ENCODE measurements at regions of chr19 and their contacts with region 1.

Region 1: DNA sequence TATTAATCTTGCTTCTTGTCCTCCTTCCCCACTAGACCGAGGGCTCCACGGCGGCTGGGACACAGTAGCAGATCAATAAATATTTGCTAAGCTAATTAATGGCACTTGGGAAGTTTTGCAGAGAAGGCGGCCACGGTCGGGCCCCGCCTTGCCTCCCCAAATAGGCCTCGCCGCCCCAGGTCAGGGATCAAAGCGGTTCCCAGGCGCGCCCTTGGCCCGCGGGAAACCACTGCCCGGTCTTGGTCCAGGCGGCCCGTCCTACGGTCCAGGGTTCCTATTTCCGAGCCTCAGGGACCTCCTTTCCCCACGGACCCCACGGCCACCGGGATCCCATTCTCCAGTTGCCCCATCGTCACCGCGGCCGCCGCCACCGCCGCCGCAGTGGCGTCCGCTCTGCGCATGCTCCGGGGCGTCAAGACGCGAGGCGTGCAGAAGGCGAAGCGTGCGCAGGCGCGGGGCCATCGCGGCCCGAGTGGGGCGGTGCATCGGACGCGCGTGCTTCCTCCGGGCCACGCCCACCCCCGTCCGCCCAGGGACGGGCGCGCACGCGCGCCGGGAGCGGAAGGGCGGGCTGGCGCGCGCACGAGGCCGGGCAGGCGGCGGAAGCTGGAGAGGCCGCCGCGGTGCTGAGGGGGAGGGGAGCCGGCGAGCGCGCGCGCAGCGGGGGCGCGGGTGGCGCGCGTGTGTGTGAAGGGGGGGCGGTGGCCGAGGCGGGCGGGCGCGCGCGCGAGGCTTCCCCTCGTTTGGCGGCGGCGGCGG is at the start of gene SMARCA4:
- DNase-seq: peak; percentile 96
- H3K4me3 Mint-ChIP-seq: peak within 1 kb of the TSS; percentile 91
- H3K27ac Mint-ChIP-seq: peak within 1 kb of the TSS; percentile 92
- H3K4me1 Mint-ChIP-seq: peaks cover 47% of the 10 kb centered on the region
- H3K27me3 Mint-ChIP-seq: no peaks in the 10 kb centered on the region
- total RNA-seq, gene SMARCA4: 111 to 115 TPM

Region 2: DNA sequence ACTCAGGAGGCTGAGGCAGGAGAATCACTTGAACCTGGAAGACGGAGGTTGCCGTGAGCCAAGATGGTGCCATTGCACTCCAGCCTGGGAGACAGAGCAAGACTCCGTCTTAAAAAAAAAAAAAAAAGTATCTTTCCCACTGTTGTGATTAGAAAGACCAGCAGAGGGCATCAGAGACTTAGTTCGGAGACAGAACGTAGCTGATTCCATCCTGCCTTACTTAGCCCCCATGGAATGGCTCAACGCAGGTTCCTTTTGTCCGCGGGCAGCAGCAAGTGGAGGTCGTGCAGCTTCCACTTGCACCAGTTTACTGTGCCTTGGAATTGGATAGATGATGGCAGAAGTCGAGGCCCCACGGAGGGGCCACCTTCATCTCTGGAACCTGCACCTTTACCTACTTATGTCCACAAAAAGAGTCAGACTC is 23.8 kb before region 1 on chr19:
- CTCF ChIA-PET with region 1: interaction called, 14 read pairs
- POLR2A ChIA-PET with region 1: no interaction called
- DNase-seq: peak; percentile 52
- H3K4me3 Mint-ChIP-seq: no peak overlapping the region
- H3K27ac Mint-ChIP-seq: no peak overlapping the region
- H3K4me1 Mint-ChIP-seq: peaks cover 14% of the 10 kb centered on the region
- H3K27me3 Mint-ChIP-seq: no peaks in the 10 kb centered on the region

Region 3: DNA sequence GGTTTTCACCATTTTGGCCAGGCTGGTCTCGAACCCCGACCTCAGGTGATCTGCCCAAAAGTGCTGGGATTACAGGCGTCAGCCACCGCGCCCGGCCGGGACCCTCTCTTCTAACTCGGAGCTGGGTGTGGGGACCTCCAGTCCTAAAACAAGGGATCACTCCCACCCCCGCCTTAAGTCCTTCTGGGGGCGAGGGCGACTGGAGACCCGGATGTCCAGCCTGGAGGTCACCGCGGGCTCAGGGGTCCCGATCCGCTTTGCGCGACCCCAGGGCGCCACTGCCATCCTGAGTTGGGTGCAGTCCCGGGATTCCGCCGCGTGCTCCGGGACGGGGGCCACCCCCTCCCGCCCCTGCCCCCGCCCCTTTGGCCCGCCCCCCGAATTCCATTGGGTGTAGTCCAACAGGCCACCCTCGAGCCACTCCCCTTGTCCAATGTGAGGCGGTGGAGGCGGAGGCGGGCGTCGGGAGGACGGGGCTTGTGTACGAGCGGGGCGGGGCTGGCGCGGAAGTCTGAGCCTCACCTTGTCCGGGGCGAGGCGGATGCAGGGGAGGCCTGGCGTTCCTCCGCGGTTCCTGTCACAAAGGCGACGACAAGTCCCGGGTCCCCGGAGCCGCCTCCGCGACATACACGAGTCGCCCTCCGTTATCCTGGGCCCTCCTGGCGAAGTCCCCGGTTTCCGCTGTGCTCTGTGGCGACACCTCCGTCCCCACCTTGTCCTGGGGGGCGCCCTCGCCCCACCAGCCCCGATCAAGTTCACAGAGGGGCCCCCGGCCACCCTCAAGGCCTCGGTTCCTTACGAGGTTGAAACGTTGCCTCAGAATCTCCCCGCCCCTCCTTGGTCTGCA is 129.8 kb after region 1 on chr19:
- CTCF ChIA-PET with region 1: no interaction called
- POLR2A ChIA-PET with region 1: no interaction called
- DNase-seq: peak; percentile 99
- H3K4me3 Mint-ChIP-seq: peak overlapping the region; percentile 97
- H3K27ac Mint-ChIP-seq: peak overlapping the region; percentile 99
- H3K4me1 Mint-ChIP-seq: peaks cover 58% of the 10 kb centered on the region
- H3K27me3 Mint-ChIP-seq: no peaks in the 10 kb centered on the region

Measured in activated CD4-positive, alpha-beta T cell treated with anti-CD3 and anti-CD28 coated beads, Interleukin-2, amount 10 ng/mL, durations not matched to agents 7 days and 5 days (primary cell).